B cell (primary cell): ENCODE measurements at regions of chr17 and their contacts with region 1.

Region 1: GRCh38 chr17:27506348-27507231 is 50.3 kb downstream of the KSR1 start:
- DNase-seq: peak; percentile 69
- ATAC-seq: peak; percentile 87
- H3K4me3 ChIP-seq: peak overlapping the region in 2 of 5 experiments; percentile 18 to 33
- H3K4me3 Mint-ChIP-seq: peak overlapping the region; percentile 80
- H3K27ac ChIP-seq: peak overlapping the region; percentile 50 to 65
- H3K27ac Mint-ChIP-seq: peak overlapping the region; percentile 88
- H3K4me1 ChIP-seq: peaks cover 21 to 39% of the 10 kb centered on the region in 2 donors
- H3K4me1 Mint-ChIP-seq: peaks cover 51% of the 10 kb centered on the region
- H3K27me3 ChIP-seq: no peaks in the 10 kb centered on the region
- H3K27me3 Mint-ChIP-seq: no peaks in the 10 kb centered on the region
- CTCF ChIP-seq: no peak

Region 2: GRCh38 chr17:27323524-27324206 is 182.9 kb before region 1 on chr17:
- CTCF ChIA-PET with region 1: no interaction called
- POLR2A ChIA-PET with region 1: no interaction called
- intact Hi-C with region 1: no loop called
- DNase-seq: no peak
- ATAC-seq: no peak
- H3K4me3 ChIP-seq: no peak overlapping the region
- H3K4me3 Mint-ChIP-seq: no peak overlapping the region
- H3K27ac ChIP-seq: no peak overlapping the region
- H3K27ac Mint-ChIP-seq: no peak overlapping the region
- H3K4me1 ChIP-seq: no peaks in the 10 kb centered on the region
- H3K4me1 Mint-ChIP-seq: peaks cover 2% of the 10 kb centered on the region
- H3K27me3 ChIP-seq: no peaks in the 10 kb centered on the region
- H3K27me3 Mint-ChIP-seq: no peaks in the 10 kb centered on the region
- CTCF ChIP-seq: no peak

Region 3: DNA sequence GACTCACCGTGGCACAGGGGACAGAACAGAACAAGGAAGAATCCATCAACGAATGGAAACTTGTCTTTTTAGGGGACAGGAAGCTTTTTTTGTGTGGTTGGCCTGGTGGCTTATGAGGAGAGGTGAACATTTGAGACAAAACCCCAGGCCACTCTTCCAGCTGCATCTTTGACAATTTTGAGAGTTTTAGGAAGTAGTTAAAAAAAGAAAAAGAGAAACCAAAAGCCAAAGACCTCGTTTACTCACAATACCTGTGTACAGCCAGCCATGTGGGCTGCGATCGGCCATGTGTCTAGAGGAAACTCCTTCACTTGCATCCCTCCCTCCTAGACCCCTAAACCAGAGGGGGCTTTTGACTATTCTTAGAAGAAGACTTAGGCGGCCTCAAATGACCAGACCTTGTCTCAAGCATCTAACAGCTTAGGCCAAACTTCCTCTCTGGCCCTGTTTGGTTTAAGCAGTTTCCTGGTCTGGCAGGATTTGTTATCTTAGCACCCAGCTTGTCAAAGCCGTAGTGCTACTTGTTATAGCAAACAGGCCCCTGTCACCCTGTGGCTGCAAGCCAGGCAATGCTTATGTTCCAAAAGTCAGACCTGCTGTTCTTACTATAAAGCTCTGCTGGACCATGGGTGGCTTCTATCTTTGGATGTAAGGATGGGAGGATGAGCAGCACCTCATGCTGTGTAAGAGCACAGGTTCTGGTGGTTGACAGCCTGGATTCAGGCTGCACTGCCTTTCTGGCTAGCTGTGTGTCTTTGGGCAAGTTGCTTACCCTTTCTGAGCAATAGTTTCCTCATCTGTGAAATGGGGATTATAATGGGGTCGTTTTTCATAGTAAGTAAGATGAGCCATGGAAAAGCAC is 32.6 kb before region 1 on chr17:
- CTCF ChIA-PET with region 1: interaction called, 3 read pairs
- POLR2A ChIA-PET with region 1: interaction called, 5 read pairs
- intact Hi-C with region 1: loop called (anchors 2 kb)
- DNase-seq: peak; percentile 71
- ATAC-seq: no peak
- H3K4me3 ChIP-seq: peak overlapping the region in 4 of 5 experiments; percentile 13 to 38 (median 20)
- H3K4me3 Mint-ChIP-seq: peak overlapping the region; percentile 81
- H3K27ac ChIP-seq: peak overlapping the region; percentile 80 to 89
- H3K27ac Mint-ChIP-seq: peak overlapping the region; percentile 92
- H3K4me1 ChIP-seq: peaks cover 35 to 63% of the 10 kb centered on the region in 2 donors
- H3K4me1 Mint-ChIP-seq: peaks cover 69% of the 10 kb centered on the region
- H3K27me3 ChIP-seq: no peaks in the 10 kb centered on the region
- H3K27me3 Mint-ChIP-seq: no peaks in the 10 kb centered on the region
- CTCF ChIP-seq: no peak

Region 4: GRCh38 chr17:27526604-27527230 is 20.1 kb after region 1 on chr17:
- CTCF ChIA-PET with region 1: no interaction called
- POLR2A ChIA-PET with region 1: no interaction called
- intact Hi-C with region 1: loop called (anchors 1 kb)
- DNase-seq: peak; percentile 69
- ATAC-seq: peak; percentile 77
- H3K4me3 ChIP-seq: peak overlapping the region in 1 of 5 experiments; percentile 15
- H3K4me3 Mint-ChIP-seq: peak overlapping the region; percentile 30
- H3K27ac ChIP-seq: no peak overlapping the region
- H3K27ac Mint-ChIP-seq: peak overlapping the region; percentile 28
- H3K4me1 ChIP-seq: peaks cover 19 to 28% of the 10 kb centered on the region in 2 donors
- H3K4me1 Mint-ChIP-seq: peaks cover 41% of the 10 kb centered on the region
- H3K27me3 ChIP-seq: no peaks in the 10 kb centered on the region
- H3K27me3 Mint-ChIP-seq: no peaks in the 10 kb centered on the region
- CTCF ChIP-seq: no peak

Region 5: GRCh38 chr17:27544350-27545131 is 38.0 kb after region 1 on chr17:
- CTCF ChIA-PET with region 1: interaction called, 3 read pairs
- POLR2A ChIA-PET with region 1: no interaction called
- intact Hi-C with region 1: loop called (anchors 5 kb)
- DNase-seq: peak; percentile 70
- ATAC-seq: peak; percentile 84
- H3K4me3 ChIP-seq: no peak overlapping the region
- H3K4me3 Mint-ChIP-seq: peak overlapping the region; percentile 75
- H3K27ac ChIP-seq: peak overlapping the region; percentile 6 to 28
- H3K27ac Mint-ChIP-seq: peak overlapping the region; percentile 87
- H3K4me1 ChIP-seq: peaks cover 58 to 65% of the 10 kb centered on the region in 2 donors
- H3K4me1 Mint-ChIP-seq: peaks cover 72% of the 10 kb centered on the region
- H3K27me3 ChIP-seq: no peaks in the 10 kb centered on the region
- H3K27me3 Mint-ChIP-seq: no peaks in the 10 kb centered on the region
- CTCF ChIP-seq: no peak